ENCODE measurements at regions of chr18 and their contacts with region 1.

Region 1: DNA sequence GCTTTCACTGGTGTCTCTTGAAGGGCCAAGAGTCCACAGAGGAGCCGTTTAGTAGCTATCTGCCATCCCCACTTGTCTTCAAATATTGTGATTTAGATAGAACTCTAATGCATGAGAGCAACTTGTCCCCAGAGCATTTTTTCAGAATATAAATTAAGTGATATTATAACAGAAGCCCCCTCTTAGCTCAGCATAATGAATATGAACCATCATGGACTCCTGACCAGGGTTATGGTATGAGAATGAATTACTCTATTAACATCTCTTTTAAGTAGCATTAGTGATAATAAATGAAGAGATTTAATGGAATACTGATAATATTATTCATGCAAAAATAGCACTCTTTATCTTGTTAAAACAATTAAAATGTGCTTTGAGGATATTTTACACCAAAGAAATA is 709.6 kb downstream of the GALR1 start:
- DNase-seq: no peak
- H3K4me3 Mint-ChIP-seq: no peak overlapping the region
- H3K27ac Mint-ChIP-seq: no peak overlapping the region
- H3K4me1 Mint-ChIP-seq: no peaks in the 10 kb centered on the region
- H3K27me3 Mint-ChIP-seq: no peaks in the 10 kb centered on the region
- CTCF ChIP-seq: no peak

Region 2: DNA sequence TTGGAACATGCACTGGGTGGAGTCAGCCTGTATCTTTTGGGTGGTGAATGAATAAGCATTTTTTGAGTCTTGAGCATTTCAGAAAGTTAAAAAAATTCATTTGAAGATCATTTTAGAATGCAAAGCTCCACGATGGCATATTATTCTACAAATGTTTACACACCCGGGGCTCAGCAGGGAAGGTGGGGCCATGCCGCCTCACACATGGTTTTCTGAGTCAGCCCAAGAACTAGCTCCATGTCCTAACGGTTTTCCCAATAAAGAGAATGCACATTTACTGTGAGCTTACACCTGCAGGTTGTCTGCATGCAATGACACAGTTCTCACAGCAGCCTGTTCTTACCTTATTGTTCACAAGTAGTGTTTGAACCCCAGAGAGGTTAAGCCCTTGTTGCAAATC is 39.3 kb before region 1 on chr18:
- CTCF ChIA-PET with region 1: no interaction called
- intact Hi-C with region 1: loop called (anchors 2 kb)
- DNase-seq: no peak
- H3K4me3 Mint-ChIP-seq: no peak overlapping the region
- H3K27ac Mint-ChIP-seq: no peak overlapping the region
- H3K4me1 Mint-ChIP-seq: no peaks in the 10 kb centered on the region
- H3K27me3 Mint-ChIP-seq: no peaks in the 10 kb centered on the region
- CTCF ChIP-seq: no peak